CD8-positive, alpha-beta memory T cell (primary cell): ENCODE measurements at regions of chr3 and their contacts with region 1.

Region 1: DNA sequence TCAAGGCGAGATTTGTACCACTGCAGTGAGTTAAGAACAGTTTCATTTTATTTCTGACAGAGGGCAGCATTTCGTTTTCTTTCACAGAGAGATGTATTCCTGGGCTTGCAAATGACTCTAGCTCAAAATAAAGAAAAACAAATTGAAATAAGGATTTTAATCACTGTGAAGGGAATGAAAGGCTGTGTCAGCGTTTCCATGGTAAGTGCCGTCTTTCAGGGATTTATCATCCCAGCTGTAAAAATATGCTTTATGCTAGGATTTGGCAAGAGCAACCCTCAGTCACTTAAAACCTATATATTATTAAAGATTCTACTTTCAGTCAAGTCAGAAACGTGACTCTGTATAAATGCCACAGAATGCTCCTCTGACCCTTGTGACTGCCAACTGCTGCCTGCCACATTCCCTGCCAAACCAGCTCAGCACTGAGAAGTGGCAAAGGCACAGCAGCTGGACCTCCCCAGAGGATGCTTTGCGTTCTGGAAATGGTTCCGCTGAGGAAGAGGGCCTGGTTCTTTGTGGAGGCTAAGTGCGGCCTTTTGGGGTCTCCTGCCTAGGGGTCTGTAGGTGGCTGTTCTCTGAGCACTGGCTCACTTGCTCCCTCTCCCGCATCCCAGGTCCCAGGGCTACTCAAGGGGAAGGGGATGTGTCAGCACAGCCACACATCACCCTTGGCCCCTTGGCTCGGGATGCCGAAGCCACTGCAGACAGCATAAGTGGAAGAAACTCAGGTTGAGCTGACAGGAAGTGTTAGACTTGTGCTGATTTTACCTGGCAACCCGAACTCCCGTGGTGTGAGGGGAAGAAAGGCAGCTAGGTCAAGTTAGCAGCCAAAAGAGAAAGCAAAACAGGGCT is 56.6 kb upstream of the POMGNT2 start:
- DNase-seq: peak; percentile 30 to 76 (median 67)
- H3K4me3 ChIP-seq: peak overlapping the region; percentile 37
- H3K4me3 Mint-ChIP-seq: peak overlapping the region; percentile 17 to 88 (median 84)
- H3K27ac ChIP-seq: peak overlapping the region; percentile 32
- H3K27ac Mint-ChIP-seq: peak overlapping the region; percentile 96 to 100 (median 98)
- H3K4me1 ChIP-seq: peaks cover 26% of the 10 kb centered on the region
- H3K4me1 Mint-ChIP-seq: peaks cover 26 to 31% (median 30%) of the 10 kb centered on the region in 3 donors
- H3K27me3 ChIP-seq: no peaks in the 10 kb centered on the region
- H3K27me3 Mint-ChIP-seq: no peaks in the 10 kb centered on the region

Region 2: DNA sequence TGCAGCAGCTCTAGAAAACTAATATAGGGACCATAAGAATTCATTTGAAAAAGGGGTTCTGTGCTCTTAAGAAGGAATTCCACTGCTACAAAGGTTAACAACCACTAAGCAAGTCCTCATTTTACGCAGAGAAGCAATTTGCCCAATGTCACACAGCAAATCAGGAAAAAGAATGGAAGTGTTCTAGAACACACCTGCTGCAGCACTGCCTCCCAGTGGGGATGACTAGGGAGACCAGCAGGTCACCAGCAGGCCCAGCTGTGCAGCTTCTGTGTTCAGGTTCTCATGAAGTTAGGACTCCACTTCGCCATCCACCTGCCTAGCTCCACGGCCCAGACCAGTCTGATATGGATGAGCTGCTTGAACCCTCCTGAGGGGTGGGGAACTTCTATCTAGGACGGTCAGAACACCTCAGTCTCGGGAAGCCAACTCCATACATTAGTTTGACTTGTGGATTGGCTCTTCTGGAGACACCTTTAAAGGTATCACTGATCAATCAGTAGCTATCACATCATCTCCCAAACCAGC is 75.1 kb before region 1 on chr3:
- CTCF ChIA-PET with region 1: no interaction called
- POLR2A ChIA-PET with region 1: no interaction called
- DNase-seq: no peak
- H3K4me3 ChIP-seq: no peak overlapping the region
- H3K4me3 Mint-ChIP-seq: no peak overlapping the region
- H3K27ac ChIP-seq: no peak overlapping the region
- H3K27ac Mint-ChIP-seq: peak overlapping the region in 1 of 8 donors; percentile 84
- H3K4me1 ChIP-seq: no peaks in the 10 kb centered on the region
- H3K4me1 Mint-ChIP-seq: peaks cover 0 to 9% (median 0%) of the 10 kb centered on the region in 3 donors
- H3K27me3 ChIP-seq: no peaks in the 10 kb centered on the region
- H3K27me3 Mint-ChIP-seq: no peaks in the 10 kb centered on the region

Region 3: DNA sequence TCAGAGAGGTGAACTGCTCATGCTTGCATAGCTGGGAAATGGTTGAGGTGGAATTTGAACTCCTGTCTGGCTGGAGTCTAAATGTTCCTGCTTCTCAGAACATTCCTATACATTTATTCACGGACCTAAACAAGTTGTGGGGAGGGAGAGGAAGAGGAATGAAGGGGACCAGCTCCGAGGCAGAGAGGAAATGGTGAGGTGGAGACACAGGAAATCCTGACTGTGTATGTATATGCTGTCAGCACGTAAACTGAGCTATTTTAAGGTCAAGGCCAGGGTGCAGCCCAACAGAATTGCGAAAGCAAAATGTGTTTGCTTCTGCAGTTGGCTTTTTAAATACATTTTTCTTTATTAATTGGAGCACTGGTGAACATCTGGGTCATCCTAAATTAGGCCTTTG is 17.6 kb after region 1 on chr3:
- CTCF ChIA-PET with region 1: interaction called, 29 read pairs
- POLR2A ChIA-PET with region 1: interaction called, 16 read pairs
- DNase-seq: peak in 4 of 5 donors; percentile 22 to 62 (median 52)
- H3K4me3 ChIP-seq: peak overlapping the region; percentile 33
- H3K4me3 Mint-ChIP-seq: peak overlapping the region; percentile 31 to 78 (median 76)
- H3K27ac ChIP-seq: peak overlapping the region; percentile 15
- H3K27ac Mint-ChIP-seq: peak overlapping the region; percentile 84 to 97 (median 95)
- H3K4me1 ChIP-seq: peaks cover 40% of the 10 kb centered on the region
- H3K4me1 Mint-ChIP-seq: peaks cover 52 to 65% (median 64%) of the 10 kb centered on the region in 3 donors
- H3K27me3 ChIP-seq: no peaks in the 10 kb centered on the region
- H3K27me3 Mint-ChIP-seq: peaks cover 0 to 1% of the 10 kb centered on the region in 2 donors

Region 4: DNA sequence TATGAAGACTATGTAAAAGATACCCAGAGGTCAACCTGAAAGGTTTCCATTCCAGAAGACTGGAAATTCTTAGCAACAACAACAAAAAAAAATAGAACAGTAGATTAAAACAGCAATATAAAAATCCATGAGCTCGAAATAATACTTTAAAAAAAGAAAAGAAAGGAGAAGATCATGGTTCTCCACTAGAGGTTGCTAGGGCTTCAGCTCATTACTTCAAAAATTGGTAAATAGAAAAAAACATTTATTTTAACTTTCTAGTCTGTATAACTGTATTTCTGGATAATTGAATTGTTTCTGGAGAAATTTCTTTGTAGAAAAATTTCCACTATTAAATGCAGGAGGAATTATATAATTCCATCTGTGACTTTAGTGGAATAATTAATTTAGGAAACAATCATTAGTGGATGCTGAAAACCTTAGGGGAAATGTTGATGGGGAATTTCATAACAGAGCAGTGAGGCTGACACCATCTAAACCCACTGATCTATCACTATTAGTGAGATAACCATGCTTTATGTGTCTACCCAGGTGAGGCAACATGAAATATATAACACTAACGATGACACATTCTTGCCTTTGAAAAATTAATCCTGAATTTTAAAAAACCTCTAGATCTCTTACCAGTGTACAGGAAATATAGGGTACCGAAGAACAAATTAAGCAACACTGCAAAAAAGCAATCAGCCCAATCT is 61.4 kb after region 1 on chr3:
- CTCF ChIA-PET with region 1: interaction called, 12 read pairs
- POLR2A ChIA-PET with region 1: no interaction called
- DNase-seq: peak in 1 of 5 donors; percentile 10
- H3K4me3 ChIP-seq: no peak overlapping the region
- H3K4me3 Mint-ChIP-seq: no peak overlapping the region
- H3K27ac ChIP-seq: no peak overlapping the region
- H3K27ac Mint-ChIP-seq: peak overlapping the region in 6 of 8 donors; percentile 15 to 81 (median 51)
- H3K4me1 ChIP-seq: peaks cover 48% of the 10 kb centered on the region
- H3K4me1 Mint-ChIP-seq: peaks cover 46 to 52% (median 50%) of the 10 kb centered on the region in 3 donors
- H3K27me3 ChIP-seq: no peaks in the 10 kb centered on the region
- H3K27me3 Mint-ChIP-seq: no peaks in the 10 kb centered on the region

Region 5: DNA sequence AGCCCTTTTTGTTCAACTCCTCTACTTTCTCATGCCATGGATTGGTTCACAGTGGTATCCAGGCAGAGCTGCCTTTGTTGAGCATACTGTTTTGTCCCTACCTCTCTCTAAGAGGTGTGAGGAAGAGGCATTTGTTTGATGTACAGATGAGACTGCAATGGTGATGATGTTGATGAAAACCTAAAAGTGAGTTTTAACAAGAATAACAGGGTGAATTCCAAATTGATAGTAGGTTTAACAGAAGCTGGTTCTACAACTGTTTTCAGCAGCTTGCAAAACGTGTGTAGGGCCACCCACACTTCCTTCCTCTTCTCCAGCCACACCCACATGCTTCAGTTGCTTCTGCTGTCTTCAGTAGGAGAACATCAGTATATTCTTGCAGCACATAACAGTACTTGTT is 134.1 kb after region 1 on chr3:
- CTCF ChIA-PET with region 1: interaction called, 12 read pairs
- POLR2A ChIA-PET with region 1: interaction called, 5 read pairs
- DNase-seq: peak; percentile 40 to 84 (median 74)
- H3K4me3 ChIP-seq: peak overlapping the region; percentile 13
- H3K4me3 Mint-ChIP-seq: peak overlapping the region; percentile 70 to 83 (median 81)
- H3K27ac ChIP-seq: no peak overlapping the region
- H3K27ac Mint-ChIP-seq: peak overlapping the region; percentile 72 to 97 (median 92)
- H3K4me1 ChIP-seq: peaks cover 86% of the 10 kb centered on the region
- H3K4me1 Mint-ChIP-seq: peaks cover 82 to 99% (median 97%) of the 10 kb centered on the region in 3 donors
- H3K27me3 ChIP-seq: no peaks in the 10 kb centered on the region
- H3K27me3 Mint-ChIP-seq: no peaks in the 10 kb centered on the region

Region 6: DNA sequence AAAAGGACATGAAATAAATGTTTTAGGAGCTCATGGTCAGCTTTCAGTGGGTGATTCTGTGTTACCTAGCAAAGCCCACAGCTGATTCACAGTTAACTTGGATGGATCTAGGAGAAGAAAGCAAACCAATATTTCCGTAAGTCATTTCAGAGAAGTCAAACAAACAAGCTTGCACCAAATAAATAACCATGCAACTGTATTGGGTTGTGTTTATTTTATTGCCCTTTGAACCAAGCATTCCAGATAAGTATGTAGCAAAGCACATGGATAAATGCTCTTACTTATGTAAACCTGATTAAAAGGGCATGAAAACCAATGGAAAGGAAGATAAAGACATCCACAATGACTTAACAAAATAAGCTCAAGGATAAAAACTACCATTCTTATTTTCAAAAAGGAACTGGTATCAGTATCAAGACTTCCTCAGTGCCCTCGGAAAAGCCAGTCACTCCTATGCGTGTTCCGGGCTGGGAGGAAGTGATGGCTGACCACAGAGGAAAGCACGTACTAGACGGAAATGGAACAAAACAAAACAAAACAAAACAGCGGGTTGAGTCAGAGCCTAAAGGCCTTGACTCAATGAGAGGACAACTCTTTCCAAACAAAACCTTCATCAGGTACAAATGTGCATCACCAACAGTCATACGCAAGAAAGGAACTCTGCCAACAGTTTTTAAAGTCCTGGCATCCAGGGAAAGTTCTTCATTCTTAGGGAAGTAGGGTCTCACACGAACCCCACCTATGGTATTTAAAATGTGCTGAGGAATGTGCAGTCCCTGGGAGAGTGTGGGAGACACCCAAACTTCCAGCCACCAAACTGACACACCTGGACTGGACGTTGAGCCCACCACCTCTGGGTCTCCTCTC is 227.2 kb after region 1 on chr3:
- CTCF ChIA-PET with region 1: interaction called, 20 read pairs
- POLR2A ChIA-PET with region 1: no interaction called
- DNase-seq: peak; percentile 43 to 89 (median 83)
- H3K4me3 ChIP-seq: peak overlapping the region; percentile 36
- H3K4me3 Mint-ChIP-seq: peak overlapping the region; percentile 0 to 88 (median 68)
- H3K27ac ChIP-seq: peak overlapping the region; percentile 62
- H3K27ac Mint-ChIP-seq: peak overlapping the region; percentile 90 to 99 (median 96)
- H3K4me1 ChIP-seq: peaks cover 47% of the 10 kb centered on the region
- H3K4me1 Mint-ChIP-seq: peaks cover 83 to 98% (median 95%) of the 10 kb centered on the region in 3 donors
- H3K27me3 ChIP-seq: no peaks in the 10 kb centered on the region
- H3K27me3 Mint-ChIP-seq: no peaks in the 10 kb centered on the region